Caco-2 (cell line): ENCODE measurements at regions of chr4 and their contacts with region 1.

Region 1: DNA sequence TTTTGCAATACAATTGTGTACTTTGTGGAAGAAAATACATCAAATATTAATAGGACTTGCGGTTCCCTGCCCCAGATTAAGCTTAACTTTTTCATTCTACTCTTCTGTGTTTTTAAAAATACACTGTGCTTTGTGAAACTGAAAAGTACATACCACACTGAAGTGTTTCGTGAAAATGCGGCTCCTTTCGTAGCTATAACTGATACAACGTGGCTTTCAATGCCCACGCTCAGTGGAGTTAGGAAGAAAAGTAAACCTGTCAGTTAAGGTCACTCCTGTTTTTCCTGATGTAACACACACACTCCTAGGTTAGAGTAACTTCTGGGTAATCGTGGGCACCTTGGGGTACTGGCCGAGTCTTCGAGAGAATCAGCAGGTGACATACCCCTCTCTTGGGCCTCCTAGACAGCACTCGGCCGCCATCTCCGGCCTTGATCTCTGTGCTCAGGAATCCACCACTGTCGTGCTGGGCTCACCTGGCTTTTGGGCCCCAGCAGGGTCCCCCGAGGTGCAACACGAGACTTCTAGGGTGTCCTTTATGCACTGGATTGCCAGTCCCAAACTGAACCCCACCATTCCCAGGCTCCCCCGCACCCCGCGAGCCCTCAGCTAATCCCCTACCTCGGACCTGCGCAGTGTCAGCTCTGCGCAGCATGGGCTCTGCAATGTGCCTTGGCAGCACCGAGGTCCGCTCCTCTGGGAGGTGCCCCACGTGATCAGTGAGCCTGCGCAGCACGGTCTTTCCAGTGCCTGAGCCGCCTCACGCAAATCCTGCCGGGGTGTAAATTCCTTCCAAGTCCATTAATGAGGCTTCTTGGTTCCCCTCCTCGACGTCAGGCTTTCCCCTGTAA is 162.6 kb upstream of the INTU start:
- DNase-seq: no peak
- H3K4me3 ChIP-seq: no peak overlapping the region
- H3K4me3 Mint-ChIP-seq: no peak overlapping the region
- H3K27ac Mint-ChIP-seq: no peak overlapping the region
- H3K4me1 ChIP-seq: no peaks in the 10 kb centered on the region
- H3K4me1 Mint-ChIP-seq: no peaks in the 10 kb centered on the region
- H3K27me3 ChIP-seq: no peaks in the 10 kb centered on the region
- H3K27me3 Mint-ChIP-seq: peaks cover 3% of the 10 kb centered on the region
- CTCF ChIP-seq: no peak

Region 2: GRCh38 chr4:126752702-126753101 is 717.5 kb before region 1 on chr4:
- CTCF ChIA-PET with region 1: no interaction called
- POLR2A ChIA-PET with region 1: no interaction called
- intact Hi-C with region 1: loop called (anchors 5 kb)
- DNase-seq: no peak
- H3K4me3 ChIP-seq: no peak overlapping the region
- H3K4me3 Mint-ChIP-seq: no peak overlapping the region
- H3K27ac Mint-ChIP-seq: no peak overlapping the region
- H3K4me1 ChIP-seq: no peaks in the 10 kb centered on the region
- H3K4me1 Mint-ChIP-seq: no peaks in the 10 kb centered on the region
- H3K27me3 ChIP-seq: no peaks in the 10 kb centered on the region; the same call in 1 of the 2 replicates
- H3K27me3 Mint-ChIP-seq: no peaks in the 10 kb centered on the region
- CTCF ChIP-seq: no peak

Region 3: DNA sequence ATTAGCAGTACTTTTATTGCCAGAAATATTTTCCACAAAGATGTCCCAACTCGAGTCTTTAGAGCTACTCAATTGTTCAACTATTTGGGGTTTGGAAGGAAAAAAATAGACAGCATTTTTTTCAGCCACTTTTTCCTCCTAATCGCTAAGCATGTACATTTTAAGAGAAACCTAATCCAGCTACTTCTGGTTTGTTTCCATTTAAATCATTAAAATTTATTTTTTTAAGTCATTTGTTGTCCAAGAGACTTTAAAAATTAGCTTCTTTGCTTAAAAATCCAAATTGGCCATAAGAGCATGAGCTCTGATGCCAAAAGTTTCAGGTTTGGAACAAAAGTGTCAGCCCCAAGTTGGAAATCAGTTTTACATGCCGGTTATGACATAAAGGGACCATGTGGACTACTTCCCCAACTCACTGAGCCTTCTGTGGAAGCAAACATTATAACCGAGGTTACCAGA is 23.7 kb before region 1 on chr4:
- CTCF ChIA-PET with region 1: no interaction called
- POLR2A ChIA-PET with region 1: no interaction called
- intact Hi-C with region 1: no loop called
- DNase-seq: no peak
- H3K4me3 ChIP-seq: no peak overlapping the region
- H3K4me3 Mint-ChIP-seq: no peak overlapping the region
- H3K27ac Mint-ChIP-seq: no peak overlapping the region
- H3K4me1 ChIP-seq: no peaks in the 10 kb centered on the region
- H3K4me1 Mint-ChIP-seq: no peaks in the 10 kb centered on the region
- H3K27me3 ChIP-seq: no peaks in the 10 kb centered on the region
- H3K27me3 Mint-ChIP-seq: peaks cover 3% of the 10 kb centered on the region
- CTCF ChIP-seq: no peak

Region 4: GRCh38 chr4:127533028-127533700 is 63.0 kb after region 1 on chr4:
- CTCF ChIA-PET with region 1: no interaction called
- POLR2A ChIA-PET with region 1: no interaction called
- intact Hi-C with region 1: no loop called
- DNase-seq: no peak
- H3K4me3 ChIP-seq: no peak overlapping the region
- H3K4me3 Mint-ChIP-seq: no peak overlapping the region
- H3K27ac Mint-ChIP-seq: no peak overlapping the region
- H3K4me1 ChIP-seq: no peaks in the 10 kb centered on the region
- H3K4me1 Mint-ChIP-seq: no peaks in the 10 kb centered on the region
- H3K27me3 ChIP-seq: no peaks in the 10 kb centered on the region
- H3K27me3 Mint-ChIP-seq: no peaks in the 10 kb centered on the region
- CTCF ChIP-seq: no peak